Aorta (tissue), 5 donors: ENCODE measurements at regions of chr1 and their contacts with region 1.

Region 1: GRCh38 chr1:162732566-162733335 is 57.8 kb upstream of the HSD17B7 start:
- DNase-seq: peak in 1 of 2 donors; percentile 65
- ATAC-seq: peak; percentile 84
- H3K4me3 ChIP-seq: no peak overlapping the region
- H3K27ac ChIP-seq: peak overlapping the region; percentile 81 to 95
- H3K4me1 ChIP-seq: peaks cover 2 to 23% of the 10 kb centered on the region in 2 donors
- H3K27me3 ChIP-seq: no peaks in the 10 kb centered on the region

Region 2: DNA sequence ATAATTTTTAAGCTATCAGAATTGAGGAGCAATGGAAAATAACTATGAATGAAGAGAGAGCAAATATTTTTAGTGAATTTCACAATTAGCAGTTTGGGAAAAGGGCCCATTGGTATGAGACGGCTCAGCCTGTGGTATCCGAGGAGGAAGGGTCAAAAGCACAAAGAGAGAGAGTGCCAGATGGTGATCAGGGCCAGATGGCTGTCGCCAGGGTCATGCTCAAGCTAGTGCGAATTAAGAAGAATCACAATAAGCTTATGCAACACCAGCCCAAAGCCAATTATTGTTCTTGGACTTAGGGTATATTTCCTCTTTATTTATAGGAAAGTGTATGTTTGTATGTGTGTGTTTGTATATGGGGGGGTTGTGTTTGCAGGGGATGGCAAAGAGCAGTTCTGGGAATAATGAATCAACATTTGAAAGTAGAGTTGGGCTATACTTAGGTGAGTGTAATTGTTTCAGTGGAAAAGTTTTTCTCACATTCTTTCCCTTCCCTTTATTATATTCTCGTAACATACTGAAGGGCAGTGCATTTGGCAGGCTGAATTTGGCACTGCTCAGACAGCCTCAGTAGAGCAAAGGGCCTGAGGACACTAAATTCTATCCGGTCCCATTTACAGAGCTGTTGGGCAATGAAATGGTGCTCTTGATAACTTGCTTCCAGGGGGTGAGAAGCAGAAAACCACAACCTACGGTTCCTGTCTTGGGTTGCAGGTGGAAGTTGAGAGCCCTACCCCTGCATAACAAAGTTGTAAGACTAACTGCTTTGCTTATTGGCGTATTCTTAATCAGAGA is 119.9 kb before region 1 on chr1:
- intact Hi-C with region 1: no loop called
- DNase-seq: peak in 1 of 2 donors; percentile 59
- ATAC-seq: peak; percentile 87
- H3K4me3 ChIP-seq: no peak overlapping the region
- H3K27ac ChIP-seq: peak overlapping the region in 1 of 2 donors; percentile 89
- H3K4me1 ChIP-seq: peaks cover 0 to 6% of the 10 kb centered on the region in 2 donors
- H3K27me3 ChIP-seq: no peaks in the 10 kb centered on the region

Region 3: DNA sequence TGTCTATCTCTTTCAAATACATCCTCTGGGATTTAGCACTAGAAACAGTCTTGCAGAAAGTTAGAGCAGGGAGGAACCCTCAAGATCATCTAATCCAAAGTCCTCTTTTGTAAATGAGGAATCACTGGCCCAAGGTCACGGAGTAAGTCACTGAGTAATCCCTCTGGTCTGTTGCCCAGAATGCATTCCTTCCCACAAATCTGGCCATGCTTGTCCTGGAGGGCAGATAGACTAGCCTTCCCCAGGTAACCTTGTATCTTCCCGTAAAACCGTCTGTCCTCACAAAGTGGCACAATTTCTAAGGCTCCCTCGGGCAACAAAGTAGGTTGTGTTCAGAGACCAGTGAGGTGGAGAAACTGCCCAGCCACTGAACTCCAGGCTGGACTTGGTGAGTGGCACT is 54.3 kb before region 1 on chr1:
- intact Hi-C with region 1: loop called in 1 of 2 experiments (anchors 5 kb)
- DNase-seq: no peak
- ATAC-seq: no peak
- H3K4me3 ChIP-seq: no peak overlapping the region
- H3K27ac ChIP-seq: peak overlapping the region in 1 of 2 donors; percentile 6
- H3K4me1 ChIP-seq: peaks cover 0 to 5% of the 10 kb centered on the region in 2 donors
- H3K27me3 ChIP-seq: no peaks in the 10 kb centered on the region

Region 4: DNA sequence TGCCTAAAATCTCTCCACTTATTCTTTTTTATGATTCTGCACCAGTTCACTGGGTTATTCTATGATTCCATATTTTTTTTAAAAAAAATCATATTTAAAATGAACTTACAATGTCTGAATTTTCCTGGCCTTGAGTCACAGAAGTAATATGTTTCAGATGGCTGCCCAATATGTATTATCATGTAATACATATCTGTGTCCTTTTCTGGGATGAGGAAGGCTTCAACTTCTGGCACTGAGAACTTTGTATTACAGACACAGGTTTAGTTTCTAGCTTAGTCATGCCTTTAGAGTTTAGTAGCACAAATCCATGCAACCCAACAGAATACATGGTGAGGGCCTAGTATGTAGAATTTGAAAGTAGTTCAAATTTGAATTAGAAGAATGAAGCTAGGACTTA is 49.9 kb after region 1 on chr1:
- intact Hi-C with region 1: no loop called
- DNase-seq: no peak
- ATAC-seq: no peak
- H3K4me3 ChIP-seq: no peak overlapping the region
- H3K27ac ChIP-seq: no peak overlapping the region
- H3K4me1 ChIP-seq: no peaks in the 10 kb centered on the region
- H3K27me3 ChIP-seq: no peaks in the 10 kb centered on the region